ENCODE measurements at regions of chr5 and their contacts with region 1.

Region 1: DNA sequence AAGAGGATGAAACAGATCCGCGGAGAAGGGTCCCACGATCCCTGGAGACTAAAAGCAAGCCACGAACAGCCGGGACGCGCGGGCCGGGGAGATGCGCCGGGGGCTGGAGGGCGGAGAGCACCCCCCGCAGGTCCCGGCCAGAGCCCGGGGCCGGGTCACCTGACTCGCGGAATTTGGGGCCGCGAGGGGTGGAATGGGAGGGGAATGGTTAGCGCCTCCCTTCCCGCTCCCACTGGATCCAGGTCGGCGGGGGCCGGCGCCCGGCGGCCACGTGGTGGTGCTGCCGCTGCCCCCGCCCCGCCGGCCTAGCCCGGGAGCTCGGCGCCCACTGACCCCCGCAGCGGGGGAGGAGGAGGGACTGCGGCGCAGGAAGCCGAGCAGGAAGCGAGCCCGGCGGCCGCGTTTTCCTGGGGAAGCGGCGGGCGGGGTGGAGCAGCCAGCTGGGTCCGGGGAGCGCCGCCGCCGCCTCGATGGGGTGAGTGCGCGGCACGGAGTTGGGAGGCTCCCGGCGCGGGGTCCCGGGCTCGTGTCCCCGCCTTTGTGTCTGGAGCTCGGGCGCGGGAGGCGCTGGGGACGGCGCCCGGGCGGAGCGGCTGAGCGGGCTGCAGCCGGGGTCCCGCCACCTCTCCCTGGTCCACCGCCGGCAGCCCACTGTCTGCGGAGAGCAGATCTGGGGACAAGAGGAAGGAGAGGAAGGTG is at the start of gene RAI14:
- DNase-seq: peak; percentile 88
- H3K4me3 ChIP-seq: peak within 1 kb of the TSS; percentile 51 to 87 (median 66)
- H3K27ac ChIP-seq: peak within 1 kb of the TSS; percentile 84 to 97 (median 94)
- H3K4me1 ChIP-seq: peaks cover 4 to 60% (median 22%) of the 10 kb centered on the region in 6 donors
- H3K27me3 ChIP-seq: peaks cover 0 to 56% (median 18%) of the 10 kb centered on the region in 7 donors
- CTCF ChIP-seq: no peak
- POLR2A ChIP-seq: peak in 1 of 3 donors; percentile 9
- total RNA-seq, gene RAI14: 88.9 to 217 (median 135) TPM

Region 2: DNA sequence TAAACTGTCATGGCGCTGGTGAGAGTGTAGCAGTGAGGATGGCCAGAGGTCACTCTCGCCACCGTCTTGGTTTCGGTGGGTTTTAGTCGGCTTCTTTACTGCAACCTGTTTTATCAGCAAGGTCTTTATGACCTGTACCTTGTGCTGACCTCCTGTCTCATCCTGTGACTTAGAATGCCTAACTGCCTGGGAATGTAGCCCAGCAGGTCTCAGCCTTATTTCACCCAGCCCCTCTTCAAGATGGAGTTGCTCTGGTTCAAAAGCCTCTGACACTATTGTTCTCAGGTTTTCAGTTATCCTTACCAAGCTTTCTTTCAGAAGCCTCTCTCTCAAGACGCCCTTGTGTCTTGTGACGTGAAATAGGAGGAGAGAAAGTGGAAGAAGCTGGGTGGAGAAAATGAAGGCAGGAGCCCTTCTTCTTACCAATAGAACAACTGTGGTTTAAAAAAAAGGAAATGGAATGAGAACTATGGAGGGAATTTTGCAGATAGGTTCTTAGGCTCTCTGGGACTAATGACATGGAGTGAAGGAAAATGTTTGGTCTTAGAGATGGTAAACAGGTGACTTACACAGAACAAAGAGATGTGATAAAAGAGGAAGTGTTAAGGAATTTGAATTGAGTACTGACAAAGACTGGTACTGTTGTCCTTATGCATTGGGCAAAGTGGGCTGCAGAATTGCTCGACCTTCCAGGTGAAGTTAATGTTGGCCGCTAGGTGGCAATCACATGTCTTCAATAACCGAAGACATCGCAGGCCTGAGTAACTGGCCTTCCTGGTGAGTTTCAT is 133.4 kb before region 1 on chr5:
- intact Hi-C with region 1: loop called (anchors 10 kb)
- DNase-seq: no peak
- H3K4me3 ChIP-seq: no peak overlapping the region
- H3K27ac ChIP-seq: peak overlapping the region in 3 of 8 donors; percentile 17 to 59 (median 23)
- H3K4me1 ChIP-seq: peaks cover 8 to 33% (median 17%) of the 10 kb centered on the region in 6 donors
- H3K27me3 ChIP-seq: no peaks in the 10 kb centered on the region
- CTCF ChIP-seq: peak; percentile 27 to 80 (median 69)
- POLR2A ChIP-seq: no peak

Measured in spleen (tissue), 13 donors.